Activated CD4-positive, alpha-beta T cell treated with anti-CD3 and anti-CD28 coated beads for 36 hours (primary cell): ENCODE measurements at regions of chr9 and their contacts with region 1.

Region 1: DNA sequence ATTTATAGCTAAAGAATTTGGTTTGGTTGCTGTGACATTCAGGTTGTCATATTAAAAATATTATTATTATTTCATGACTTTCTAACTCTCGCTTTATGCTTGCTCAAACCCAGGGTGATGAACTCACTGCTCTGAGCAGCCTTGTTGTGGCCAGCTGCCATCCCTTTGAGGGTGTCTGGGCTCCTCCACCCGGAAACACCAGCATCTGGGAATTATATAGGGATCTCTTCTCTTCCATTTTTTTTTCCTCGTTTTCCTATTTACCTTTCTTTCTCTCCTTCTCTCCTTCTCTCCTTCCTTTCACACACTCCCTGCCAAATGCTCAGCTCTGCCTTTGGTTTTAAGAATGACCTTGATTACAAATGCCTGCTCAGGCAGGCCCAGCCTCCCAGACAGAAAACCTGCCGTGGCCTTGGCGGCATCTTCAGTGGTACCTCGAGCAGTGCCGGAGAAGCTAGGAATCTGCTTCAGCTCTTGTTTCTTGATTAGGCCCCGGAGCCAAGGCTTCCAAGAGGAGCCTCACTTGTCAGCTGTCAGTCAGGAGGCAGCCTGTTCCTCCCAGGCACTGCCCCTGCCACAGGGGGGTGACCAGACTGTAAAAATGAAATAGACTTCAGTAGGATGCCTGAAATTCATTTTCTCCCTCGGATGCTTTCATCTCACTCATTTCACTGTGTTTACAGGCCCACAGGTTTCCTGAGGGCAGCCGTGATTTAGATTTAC is 355.6 kb upstream of the SMARCA2 start:
- DNase-seq: no peak
- ATAC-seq: no peak
- H3K4me3 Mint-ChIP-seq: no peak overlapping the region
- H3K27ac Mint-ChIP-seq: no peak overlapping the region
- H3K4me1 Mint-ChIP-seq: no peaks in the 10 kb centered on the region
- H3K27me3 Mint-ChIP-seq: peaks cover 10% of the 10 kb centered on the region

Region 2: DNA sequence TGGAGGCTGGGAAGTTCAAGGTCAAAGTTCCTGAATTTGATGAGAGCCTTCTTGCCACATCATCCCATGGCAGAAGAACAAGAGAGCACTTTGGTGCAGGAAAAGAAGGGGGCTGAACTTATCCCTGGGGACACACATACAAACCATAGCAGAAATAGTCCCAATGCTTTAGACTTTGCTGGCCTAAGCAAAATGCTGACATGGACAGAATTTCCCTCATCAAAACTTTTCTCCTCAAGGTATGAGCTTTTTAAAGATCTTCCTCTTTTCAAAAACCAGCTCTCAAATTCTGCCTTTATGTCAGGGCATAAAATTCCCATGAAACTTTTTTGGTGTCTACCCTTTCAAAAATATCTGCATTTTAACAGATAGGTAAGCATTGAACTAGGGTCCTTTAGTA is 13.8 kb after region 1 on chr9:
- CTCF ChIA-PET with region 1: no interaction called
- POLR2A ChIA-PET with region 1: no interaction called
- intact Hi-C with region 1: loop called in 1 of 2 experiments (anchors 2 kb)
- DNase-seq: no peak
- ATAC-seq: no peak
- H3K4me3 Mint-ChIP-seq: no peak overlapping the region
- H3K27ac Mint-ChIP-seq: no peak overlapping the region
- H3K4me1 Mint-ChIP-seq: no peaks in the 10 kb centered on the region
- H3K27me3 Mint-ChIP-seq: no peaks in the 10 kb centered on the region